Activated CD8-positive, alpha-beta T cell treated with anti-CD3 and anti-CD28 coated beads, Interleukin-2, amount 10 ng/mL, durations not matched to agents 7 days and 5 days (primary cell): ENCODE measurements at regions of chr3 and their contacts with region 1.

Region 1: DNA sequence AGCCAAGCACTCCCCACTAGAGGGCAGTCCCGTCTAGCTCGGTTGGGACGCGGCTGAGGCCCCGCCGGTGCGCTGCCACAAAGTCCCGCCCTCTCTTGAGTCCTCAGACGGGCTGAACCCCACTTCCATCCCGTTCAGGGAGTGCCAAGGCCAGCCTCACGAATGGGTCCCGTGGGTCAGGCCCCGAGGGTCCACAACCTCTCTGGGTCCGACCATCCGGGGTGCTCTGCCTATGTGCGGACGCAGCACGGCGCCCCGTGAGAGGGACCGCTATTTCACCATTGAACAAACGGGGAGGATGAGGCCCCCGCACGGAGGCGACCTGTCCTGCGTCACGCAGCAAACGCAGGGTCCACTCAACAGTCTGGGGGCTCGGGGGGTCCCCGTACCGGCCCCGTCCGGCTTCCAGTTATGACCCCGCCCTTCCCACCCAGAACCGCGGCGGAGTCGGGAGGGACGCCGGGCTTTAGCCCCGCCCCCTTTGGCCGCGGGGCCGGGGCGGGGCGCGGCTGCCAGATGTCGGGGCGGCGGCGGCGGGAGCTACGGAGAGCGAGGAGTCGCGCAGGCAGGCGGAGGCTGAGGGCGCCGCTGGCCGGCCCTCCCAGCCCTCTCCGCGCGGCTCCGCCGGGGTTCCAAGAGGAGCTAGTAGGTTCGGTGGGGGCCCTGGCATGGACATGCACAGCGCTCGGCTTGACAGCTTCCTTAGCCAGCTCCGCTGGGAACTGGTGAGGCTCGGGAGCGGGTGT is at the start of gene INKA1:
- DNase-seq: peak; percentile 93
- ATAC-seq: peak; percentile 87
- H3K4me3 Mint-ChIP-seq: peak within 1 kb of the TSS; percentile 83
- H3K27ac Mint-ChIP-seq: peak within 1 kb of the TSS; percentile 83
- H3K4me1 Mint-ChIP-seq: peaks cover 46% of the 10 kb centered on the region
- H3K27me3 Mint-ChIP-seq: peaks cover 16% of the 10 kb centered on the region
- total RNA-seq, gene INKA1: 1.3 to 2.2 TPM

Region 2: GRCh38 chr3:49647741-49648140 is 155.2 kb before region 1 on chr3:
- CTCF ChIA-PET with region 1: no interaction called
- POLR2A ChIA-PET with region 1: no interaction called
- DNase-seq: no peak
- ATAC-seq: no peak
- H3K4me3 Mint-ChIP-seq: no peak overlapping the region
- H3K27ac Mint-ChIP-seq: no peak overlapping the region
- H3K4me1 Mint-ChIP-seq: peaks cover 3% of the 10 kb centered on the region
- H3K27me3 Mint-ChIP-seq: no peaks in the 10 kb centered on the region

Region 3: DNA sequence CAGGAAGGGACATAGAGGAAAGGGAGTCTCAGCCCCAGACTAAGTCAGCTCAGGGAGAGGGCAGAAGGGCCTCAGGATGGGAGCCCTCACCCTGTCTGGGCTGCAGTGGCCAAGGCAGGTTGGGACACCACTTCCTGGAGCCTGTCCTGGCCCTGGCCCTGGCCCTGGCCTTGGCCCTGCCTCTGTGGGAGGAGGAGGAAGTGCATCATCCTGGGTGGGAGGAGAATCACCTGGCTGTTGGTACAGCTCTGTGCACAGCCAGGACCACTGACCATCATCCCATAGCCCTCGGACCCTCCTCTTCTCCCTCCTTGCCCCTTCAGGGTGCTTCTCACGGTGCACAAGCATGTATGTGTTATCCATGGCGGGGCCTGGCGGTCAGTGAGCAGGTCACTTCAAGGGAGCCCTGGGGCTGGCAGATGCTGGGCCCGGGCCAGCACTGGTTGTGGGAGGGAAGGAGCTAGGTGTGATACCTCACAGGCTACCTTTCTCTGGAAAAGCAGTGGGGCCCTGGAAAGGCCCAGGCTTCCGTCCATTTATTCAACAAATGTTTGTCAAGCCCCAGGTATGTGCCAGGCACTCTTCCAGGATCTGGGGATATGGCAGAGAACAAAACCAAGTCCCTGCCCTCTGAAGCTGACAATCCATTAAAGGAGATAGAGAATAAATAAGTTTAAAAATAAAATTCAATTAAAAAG is 136.9 kb before region 1 on chr3:
- CTCF ChIA-PET with region 1: no interaction called
- POLR2A ChIA-PET with region 1: no interaction called
- DNase-seq: no peak
- ATAC-seq: no peak
- H3K4me3 Mint-ChIP-seq: no peak overlapping the region
- H3K27ac Mint-ChIP-seq: peak overlapping the region; percentile 66
- H3K4me1 Mint-ChIP-seq: peaks cover 8% of the 10 kb centered on the region
- H3K27me3 Mint-ChIP-seq: no peaks in the 10 kb centered on the region

Region 4: GRCh38 chr3:49786241-49786958 is 16.5 kb before region 1 on chr3 and contains the start of gene IP6K1:
- CTCF ChIA-PET with region 1: interaction called, 38 read pairs
- POLR2A ChIA-PET with region 1: interaction called, 23 read pairs
- DNase-seq: peak; percentile 100
- ATAC-seq: peak; percentile 99
- H3K4me3 Mint-ChIP-seq: peak within 1 kb of the TSS; percentile 86
- H3K27ac Mint-ChIP-seq: peak within 1 kb of the TSS; percentile 97
- H3K4me1 Mint-ChIP-seq: peaks cover 31% of the 10 kb centered on the region
- H3K27me3 Mint-ChIP-seq: peaks cover 3% of the 10 kb centered on the region
- total RNA-seq, gene IP6K1: 37.7 to 38.1 TPM

Region 5: DNA sequence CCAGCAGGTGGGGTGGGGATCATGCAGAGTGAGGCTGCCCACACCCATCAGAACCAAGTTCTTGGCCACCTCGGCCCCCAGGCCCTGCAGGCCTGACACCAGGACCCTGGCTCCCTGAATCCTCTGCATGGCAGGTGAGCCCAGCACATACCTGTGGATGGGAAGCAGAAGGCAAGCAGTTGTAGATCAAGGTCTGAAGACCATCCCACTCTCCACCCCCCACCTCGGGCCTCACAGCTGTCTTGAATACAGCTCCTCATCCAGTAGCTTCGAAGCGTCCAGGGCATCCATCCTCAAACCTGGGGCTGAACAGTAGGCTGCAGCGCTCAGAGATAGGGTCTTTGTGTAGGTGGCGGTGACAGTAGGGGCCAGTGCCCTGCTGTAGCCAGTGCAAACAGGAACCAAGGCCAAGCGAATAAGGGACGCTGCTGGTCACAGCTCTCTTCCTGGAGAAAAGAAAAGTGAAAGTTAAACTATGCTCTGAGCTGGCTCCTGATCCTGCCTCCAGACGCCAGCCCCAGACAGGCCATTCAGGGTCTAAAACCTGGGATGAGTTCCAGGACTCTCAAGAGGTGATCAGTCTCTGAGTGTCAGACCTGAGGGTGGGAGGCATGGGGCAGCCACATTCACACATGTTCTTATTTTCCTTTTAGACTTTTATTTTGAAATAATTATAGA is 10.7 kb after region 1 on chr3 and contains the start of gene UBA7:
- CTCF ChIA-PET with region 1: interaction called, 39 read pairs
- POLR2A ChIA-PET with region 1: interaction called, 18 read pairs
- DNase-seq: peak; percentile 63
- ATAC-seq: peak; percentile 95
- H3K4me3 Mint-ChIP-seq: peak within 1 kb of the TSS; percentile 97
- H3K27ac Mint-ChIP-seq: peak within 1 kb of the TSS; percentile 98
- H3K4me1 Mint-ChIP-seq: peaks cover 34% of the 10 kb centered on the region
- H3K27me3 Mint-ChIP-seq: no peaks in the 10 kb centered on the region
- total RNA-seq, gene UBA7: 187 to 208 TPM

Region 6: GRCh38 chr3:49826016-49826415 is 23.1 kb after region 1 on chr3:
- CTCF ChIA-PET with region 1: interaction called, 305 read pairs
- POLR2A ChIA-PET with region 1: no interaction called
- DNase-seq: no peak
- ATAC-seq: no peak
- H3K4me3 Mint-ChIP-seq: no peak overlapping the region
- H3K27ac Mint-ChIP-seq: no peak overlapping the region
- H3K4me1 Mint-ChIP-seq: no peaks in the 10 kb centered on the region
- H3K27me3 Mint-ChIP-seq: no peaks in the 10 kb centered on the region

Region 7: DNA sequence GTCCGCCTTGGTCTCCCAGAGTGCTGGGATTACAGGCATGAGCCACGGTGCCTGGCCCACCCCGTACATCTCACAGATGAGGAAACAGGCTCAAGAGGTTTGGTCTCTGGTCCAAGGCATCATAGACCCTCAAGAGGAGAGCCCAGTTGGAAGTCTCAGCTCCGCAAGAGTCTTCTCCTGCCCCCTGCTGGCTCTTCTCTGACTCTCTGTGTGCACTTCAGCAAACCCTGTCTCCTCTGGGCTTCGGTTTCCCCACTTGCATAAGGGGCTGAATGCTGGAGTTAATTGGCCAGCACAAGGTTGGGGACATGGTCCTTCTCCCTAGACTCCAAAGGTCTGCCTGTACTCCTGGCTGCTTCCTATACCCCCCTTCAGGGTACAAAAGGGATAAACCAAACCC is 96.9 kb after region 1 on chr3:
- CTCF ChIA-PET with region 1: interaction called, 13 read pairs
- POLR2A ChIA-PET with region 1: no interaction called
- DNase-seq: peak; percentile 35
- ATAC-seq: no peak
- H3K4me3 Mint-ChIP-seq: no peak overlapping the region
- H3K27ac Mint-ChIP-seq: no peak overlapping the region
- H3K4me1 Mint-ChIP-seq: peaks cover 18% of the 10 kb centered on the region
- H3K27me3 Mint-ChIP-seq: no peaks in the 10 kb centered on the region